Naive thymus-derived CD4-positive, alpha-beta T cell (primary cell): ENCODE measurements at regions of chr3 and their contacts with region 1.

Region 1: DNA sequence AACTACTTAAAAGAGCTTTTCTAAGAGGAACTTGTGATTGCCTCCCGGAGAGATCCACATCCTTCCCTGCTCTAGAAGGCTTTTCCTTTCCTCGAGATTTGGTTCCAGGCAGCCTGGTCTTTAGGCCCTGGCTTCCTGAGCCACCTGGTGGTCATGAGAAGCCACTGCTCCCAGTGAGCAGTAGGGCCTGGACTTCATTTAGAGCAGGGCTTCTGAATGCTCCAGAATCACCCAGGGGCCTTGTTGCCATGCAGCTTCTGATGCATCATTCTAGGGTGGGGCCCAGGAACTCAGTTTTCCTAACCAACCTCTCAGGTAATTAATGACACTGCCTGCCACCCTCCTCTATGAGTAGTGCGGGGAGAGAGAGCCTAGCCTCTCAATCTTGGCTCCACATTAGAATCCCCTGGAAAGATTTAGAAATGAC is 29.6 kb downstream of the PSMD6 start:
- DNase-seq: peak; percentile 28 to 70 (median 58)
- ATAC-seq: peak; percentile 87
- H3K4me3 ChIP-seq: no peak overlapping the region
- H3K4me3 Mint-ChIP-seq: peak overlapping the region in 4 of 10 donors; percentile 5 to 23 (median 18)
- H3K27ac ChIP-seq: no peak overlapping the region
- H3K27ac Mint-ChIP-seq: peak overlapping the region; percentile 53 to 92 (median 84)
- H3K4me1 ChIP-seq: peaks cover 0 to 10% of the 10 kb centered on the region in 2 donors
- H3K4me1 Mint-ChIP-seq: peaks cover 34 to 79% (median 56%) of the 10 kb centered on the region in 7 donors
- H3K27me3 ChIP-seq: no peaks in the 10 kb centered on the region
- H3K27me3 Mint-ChIP-seq: no peaks in the 10 kb centered on the region

Region 2: DNA sequence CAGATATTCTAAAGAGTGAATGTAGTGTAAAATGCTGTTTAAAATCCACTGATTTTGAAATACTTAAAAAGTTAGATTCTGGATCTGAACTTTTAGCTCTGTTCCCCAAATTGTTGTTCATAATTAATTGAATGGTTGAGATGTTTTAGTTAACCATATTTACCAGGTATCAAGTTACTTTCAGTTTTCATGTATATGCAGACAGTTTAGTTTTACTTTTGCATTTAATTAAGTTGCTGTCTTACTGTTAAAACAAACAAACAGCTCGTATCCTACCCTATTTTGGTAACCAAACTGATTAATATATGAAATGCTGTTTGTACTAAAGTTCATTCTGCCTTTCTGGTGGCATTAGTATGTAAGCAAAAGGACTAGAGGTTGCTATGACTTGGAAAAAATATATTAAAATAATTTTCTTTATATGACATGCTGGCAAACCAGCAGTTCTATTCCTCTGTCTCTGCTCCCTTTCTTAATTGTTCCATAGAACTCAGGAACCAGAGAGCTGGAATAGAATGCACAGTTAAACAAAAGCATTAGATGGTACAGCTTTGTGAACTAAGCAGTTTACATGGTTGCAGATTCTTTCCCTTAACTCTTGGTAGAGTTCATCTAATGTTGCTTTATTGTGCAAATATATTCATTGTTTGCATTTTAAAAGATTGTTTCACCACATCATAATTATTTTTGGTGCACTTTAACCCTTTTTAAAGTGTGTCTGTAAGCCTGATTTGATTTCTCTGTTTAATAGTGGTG is 42.0 kb before region 1 on chr3:
- CTCF ChIA-PET with region 1: interaction called, 13 read pairs
- POLR2A ChIA-PET with region 1: no interaction called
- intact Hi-C with region 1: no loop called
- DNase-seq: no peak
- ATAC-seq: no peak
- H3K4me3 ChIP-seq: no peak overlapping the region
- H3K4me3 Mint-ChIP-seq: peak overlapping the region in 6 of 10 donors; percentile 40 to 76 (median 56)
- H3K27ac ChIP-seq: peak overlapping the region; percentile 15
- H3K27ac Mint-ChIP-seq: peak overlapping the region; percentile 8 to 90 (median 50)
- H3K4me1 ChIP-seq: peaks cover 13 to 28% of the 10 kb centered on the region in 2 donors
- H3K4me1 Mint-ChIP-seq: peaks cover 22 to 54% (median 47%) of the 10 kb centered on the region in 7 donors
- H3K27me3 ChIP-seq: no peaks in the 10 kb centered on the region
- H3K27me3 Mint-ChIP-seq: no peaks in the 10 kb centered on the region

Region 3: DNA sequence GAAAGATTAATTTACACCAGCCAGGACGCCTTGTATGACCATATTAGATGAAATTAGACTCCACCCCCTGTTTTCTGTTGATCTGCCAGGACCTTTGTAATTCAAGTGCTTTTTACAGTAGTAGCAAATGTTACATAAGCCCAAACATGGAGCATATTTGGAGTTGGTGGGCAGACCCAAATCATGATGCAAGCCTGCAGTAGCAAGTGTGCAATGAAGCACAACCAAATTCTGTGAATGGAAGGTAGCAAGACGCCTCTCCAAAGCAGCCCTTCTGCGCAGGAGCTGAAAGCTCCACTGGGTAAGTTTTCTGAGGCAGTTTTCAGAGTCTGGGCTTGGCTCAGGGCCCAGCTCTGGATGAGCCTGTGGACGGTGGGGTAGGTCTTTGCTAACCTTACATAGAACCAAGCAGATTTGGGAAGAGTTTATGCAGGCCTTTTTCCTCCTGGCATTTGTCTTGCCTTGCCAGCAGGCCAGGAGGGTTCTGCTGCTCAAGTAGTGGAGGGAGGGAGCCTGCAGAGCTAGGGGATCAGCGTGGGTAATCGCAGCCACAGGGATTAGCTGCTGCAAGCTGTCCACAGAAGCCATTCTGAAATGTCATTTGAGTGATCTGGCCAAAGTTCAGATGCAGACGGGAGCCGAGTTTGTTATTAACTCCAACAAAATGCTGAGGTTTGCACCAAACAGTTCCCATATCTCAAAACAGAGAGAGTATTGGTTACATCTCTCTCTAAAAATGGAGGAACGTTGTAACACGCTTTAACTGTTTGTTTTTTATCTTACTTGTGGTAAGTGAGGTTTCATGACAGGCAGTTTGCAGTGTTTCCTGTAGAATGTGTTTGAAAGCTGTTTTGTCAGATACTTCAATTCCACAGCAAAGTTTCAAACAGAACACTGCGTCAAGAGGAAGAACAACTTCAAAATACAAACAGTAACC is 25.7 kb before region 1 on chr3:
- CTCF ChIA-PET with region 1: interaction called, 249 read pairs
- POLR2A ChIA-PET with region 1: interaction called, 50 read pairs
- intact Hi-C with region 1: loop called (anchors 1 kb)
- DNase-seq: peak; percentile 14 to 93 (median 87)
- ATAC-seq: peak; percentile 88
- H3K4me3 ChIP-seq: peak overlapping the region; percentile 91
- H3K4me3 Mint-ChIP-seq: peak overlapping the region; percentile 86 to 98 (median 92)
- H3K27ac ChIP-seq: peak overlapping the region; percentile 80
- H3K27ac Mint-ChIP-seq: peak overlapping the region; percentile 92 to 99 (median 96)
- H3K4me1 ChIP-seq: peaks cover 46 to 48% of the 10 kb centered on the region in 2 donors
- H3K4me1 Mint-ChIP-seq: peaks cover 43 to 78% (median 65%) of the 10 kb centered on the region in 7 donors
- H3K27me3 ChIP-seq: no peaks in the 10 kb centered on the region
- H3K27me3 Mint-ChIP-seq: no peaks in the 10 kb centered on the region

Region 4: DNA sequence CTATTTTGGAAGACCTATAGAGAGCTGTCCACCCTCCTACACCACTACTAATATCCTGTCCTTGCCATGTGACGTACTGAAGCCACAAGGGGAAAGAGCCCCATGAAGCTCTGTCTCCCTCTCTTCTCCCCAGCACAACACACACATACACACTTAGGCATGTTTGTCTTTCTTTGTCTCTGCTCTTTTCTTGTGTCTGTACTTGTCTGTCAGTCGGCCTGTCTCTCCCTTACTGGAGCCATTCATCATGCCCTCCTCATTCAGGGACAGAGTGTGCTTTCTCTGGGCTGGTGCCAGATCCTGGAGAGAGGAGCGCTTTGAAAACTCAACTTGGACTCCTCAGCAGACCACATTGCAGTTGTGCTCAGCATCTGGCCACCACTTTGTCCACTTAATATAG is 17.9 kb before region 1 on chr3:
- CTCF ChIA-PET with region 1: interaction called, 249 read pairs
- POLR2A ChIA-PET with region 1: interaction called, 12 read pairs
- intact Hi-C with region 1: loop called in 1 of 2 experiments (anchors 1 kb)
- DNase-seq: no peak
- ATAC-seq: no peak
- H3K4me3 ChIP-seq: no peak overlapping the region
- H3K4me3 Mint-ChIP-seq: peak overlapping the region; percentile 14 to 88 (median 68)
- H3K27ac ChIP-seq: peak overlapping the region; percentile 19
- H3K27ac Mint-ChIP-seq: peak overlapping the region in 8 of 9 donors; percentile 77 to 96 (median 88)
- H3K4me1 ChIP-seq: peaks cover 88% of the 10 kb centered on the region in 2 donors
- H3K4me1 Mint-ChIP-seq: peaks cover 68 to 100% (median 97%) of the 10 kb centered on the region in 7 donors
- H3K27me3 ChIP-seq: no peaks in the 10 kb centered on the region
- H3K27me3 Mint-ChIP-seq: no peaks in the 10 kb centered on the region

Region 5: GRCh38 chr3:64011685-64012084 is 18.0 kb after region 1 on chr3:
- CTCF ChIA-PET with region 1: interaction called, 16 read pairs
- POLR2A ChIA-PET with region 1: interaction called, 13 read pairs
- intact Hi-C with region 1: loop called in 1 of 2 experiments (anchors 2 kb)
- DNase-seq: no peak
- ATAC-seq: no peak
- H3K4me3 ChIP-seq: no peak overlapping the region
- H3K4me3 Mint-ChIP-seq: no peak overlapping the region
- H3K27ac ChIP-seq: peak overlapping the region; percentile 22
- H3K27ac Mint-ChIP-seq: peak overlapping the region in 3 of 9 donors; percentile 38 to 72 (median 53)
- H3K4me1 ChIP-seq: no peaks in the 10 kb centered on the region
- H3K4me1 Mint-ChIP-seq: peaks cover 21 to 56% (median 34%) of the 10 kb centered on the region in 7 donors
- H3K27me3 ChIP-seq: no peaks in the 10 kb centered on the region
- H3K27me3 Mint-ChIP-seq: no peaks in the 10 kb centered on the region